GM10248 (cell line): ENCODE measurements at regions of chr2 and their contacts with region 1.

Region 1: DNA sequence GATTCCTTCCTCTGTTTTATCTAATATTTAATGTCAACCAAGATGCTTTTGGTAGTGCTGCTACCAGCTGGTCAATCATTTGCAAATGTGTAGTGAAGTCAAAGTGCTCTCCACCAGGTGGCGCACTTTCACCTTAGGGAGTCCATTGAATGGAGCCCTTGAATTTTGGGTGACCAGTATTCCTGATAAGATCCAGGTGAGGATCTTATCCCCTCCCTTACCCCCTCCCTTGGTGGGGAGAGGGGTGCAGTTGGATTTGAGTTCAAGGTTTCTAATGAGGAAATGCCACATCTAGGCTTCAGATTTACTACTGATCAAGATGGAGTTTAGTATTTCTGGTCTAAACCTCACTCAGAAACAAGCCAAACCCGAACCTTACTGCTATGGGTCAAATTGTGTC is 12.0 kb upstream of the E2F6 start:
- DNase-seq: peak; percentile 69
- CTCF ChIP-seq: peak; percentile 85

Region 2: GRCh38 chr2:11357428-11357972 is 120.5 kb before region 1 on chr2:
- CTCF ChIA-PET with region 1: no interaction called
- POLR2A ChIA-PET with region 1: no interaction called
- DNase-seq: no peak
- CTCF ChIP-seq: no peak

Region 3: DNA sequence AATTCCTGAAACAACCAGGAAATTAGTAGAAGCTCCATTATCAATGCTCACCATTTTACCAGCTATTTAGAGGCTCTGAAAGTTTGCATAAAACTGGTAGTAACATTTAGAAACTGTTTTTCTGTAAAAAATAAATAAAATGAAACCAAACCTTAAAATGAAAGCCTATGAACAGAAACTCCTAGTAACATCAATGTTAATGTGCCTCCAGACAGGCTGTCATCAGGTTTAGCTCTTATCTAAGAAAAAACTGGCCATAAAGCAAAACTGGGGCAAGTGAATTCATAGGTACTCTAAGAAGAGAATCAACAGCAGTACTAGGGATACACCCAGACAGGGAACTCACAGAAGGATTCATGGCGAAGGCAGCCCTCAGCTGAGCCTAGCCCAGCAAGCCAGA is 20.1 kb before region 1 on chr2:
- CTCF ChIA-PET with region 1: interaction called, 11 read pairs
- POLR2A ChIA-PET with region 1: no interaction called
- DNase-seq: no peak
- CTCF ChIP-seq: no peak

Region 4: DNA sequence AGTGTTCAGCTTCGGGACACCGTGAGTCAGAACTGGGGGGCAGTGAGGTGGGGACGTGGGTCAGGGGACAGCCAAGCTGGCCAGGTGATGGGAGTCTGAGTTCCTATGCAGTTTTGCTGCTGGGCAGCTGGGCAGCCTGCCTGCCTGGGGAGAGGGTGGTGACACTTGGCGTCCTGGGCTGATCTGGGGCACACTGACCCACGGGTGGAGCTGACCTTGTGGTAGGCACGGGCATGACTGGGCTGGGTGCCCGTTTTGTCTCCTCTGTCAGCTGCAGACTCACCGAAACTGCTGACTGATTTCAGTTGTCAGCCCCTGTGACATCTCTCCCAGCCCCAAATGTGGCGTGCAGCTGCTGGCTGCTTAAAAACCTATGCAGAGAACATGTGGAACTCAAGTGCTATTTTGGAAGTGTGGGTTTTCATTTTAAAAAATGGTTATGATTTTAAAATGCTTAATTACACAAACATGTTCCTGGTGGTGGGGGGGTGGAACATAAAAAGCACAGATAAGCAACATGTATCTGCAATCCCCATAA is 20.6 kb after region 1 on chr2:
- CTCF ChIA-PET with region 1: interaction called, 13 read pairs
- POLR2A ChIA-PET with region 1: no interaction called
- DNase-seq: peak; percentile 59
- CTCF ChIP-seq: no peak